ENCODE measurements at regions of chr9 and their contacts with region 1.

Region 1: GRCh38 chr9:87805259-87805658 is 77.4 kb upstream of the SPATA31E1 start:
- DNase-seq: no peak
- ATAC-seq: no peak
- H3K4me3 ChIP-seq: no peak overlapping the region
- H3K4me3 Mint-ChIP-seq: no peak overlapping the region
- H3K27ac ChIP-seq: no peak overlapping the region
- H3K27ac Mint-ChIP-seq: no peak overlapping the region
- H3K4me1 ChIP-seq: no peaks in the 10 kb centered on the region
- H3K4me1 Mint-ChIP-seq: no peaks in the 10 kb centered on the region
- H3K27me3 ChIP-seq: no peaks in the 10 kb centered on the region
- H3K27me3 Mint-ChIP-seq: peaks cover 8% of the 10 kb centered on the region
- CTCF ChIP-seq: no peak

Region 2: DNA sequence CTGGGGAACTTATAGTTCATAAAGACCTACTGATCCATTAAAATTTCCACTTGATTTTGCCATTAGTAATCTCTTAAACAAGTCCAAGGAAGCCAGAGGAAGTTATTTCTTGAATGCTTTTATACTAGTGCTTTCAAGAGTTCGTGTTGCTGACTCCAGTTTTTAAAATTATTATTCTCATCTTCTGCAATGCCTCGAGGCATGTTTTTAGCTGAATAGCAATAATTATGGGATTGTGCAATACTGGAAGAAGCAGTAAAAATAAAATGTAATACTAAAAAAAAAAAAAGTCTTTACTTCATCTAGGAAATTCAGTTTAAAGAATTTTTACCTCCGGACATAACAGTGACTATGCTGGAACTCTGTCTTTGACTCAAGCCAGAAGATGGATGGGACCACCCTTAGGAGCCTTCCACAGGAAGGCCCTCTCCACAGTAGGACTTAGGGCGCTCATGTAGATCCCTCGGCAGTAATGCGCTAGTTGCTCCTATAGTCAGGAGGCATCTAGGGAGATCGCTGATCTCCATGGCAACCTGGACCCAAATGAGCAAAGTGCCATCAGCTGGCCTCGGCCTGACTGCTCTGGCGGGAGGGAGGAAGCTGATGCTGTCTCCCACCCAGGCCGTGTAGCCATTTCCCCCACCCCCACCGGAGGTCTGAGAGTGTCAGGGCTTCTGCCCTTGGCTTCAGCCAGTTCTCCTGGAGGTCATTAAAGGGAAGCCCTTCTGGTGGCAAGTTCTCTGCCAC is 250.9 kb before region 1 on chr9:
- CTCF ChIA-PET with region 1: no interaction called
- POLR2A ChIA-PET with region 1: no interaction called
- intact Hi-C with region 1: loop called in 1 of 2 experiments (anchors 5 kb)
- DNase-seq: no peak
- ATAC-seq: no peak
- H3K4me3 ChIP-seq: no peak overlapping the region
- H3K4me3 Mint-ChIP-seq: no peak overlapping the region
- H3K27ac ChIP-seq: no peak overlapping the region
- H3K27ac Mint-ChIP-seq: no peak overlapping the region
- H3K4me1 ChIP-seq: no peaks in the 10 kb centered on the region
- H3K4me1 Mint-ChIP-seq: no peaks in the 10 kb centered on the region
- H3K27me3 ChIP-seq: no peaks in the 10 kb centered on the region
- H3K27me3 Mint-ChIP-seq: peaks cover 8% of the 10 kb centered on the region
- CTCF ChIP-seq: no peak

Region 3: DNA sequence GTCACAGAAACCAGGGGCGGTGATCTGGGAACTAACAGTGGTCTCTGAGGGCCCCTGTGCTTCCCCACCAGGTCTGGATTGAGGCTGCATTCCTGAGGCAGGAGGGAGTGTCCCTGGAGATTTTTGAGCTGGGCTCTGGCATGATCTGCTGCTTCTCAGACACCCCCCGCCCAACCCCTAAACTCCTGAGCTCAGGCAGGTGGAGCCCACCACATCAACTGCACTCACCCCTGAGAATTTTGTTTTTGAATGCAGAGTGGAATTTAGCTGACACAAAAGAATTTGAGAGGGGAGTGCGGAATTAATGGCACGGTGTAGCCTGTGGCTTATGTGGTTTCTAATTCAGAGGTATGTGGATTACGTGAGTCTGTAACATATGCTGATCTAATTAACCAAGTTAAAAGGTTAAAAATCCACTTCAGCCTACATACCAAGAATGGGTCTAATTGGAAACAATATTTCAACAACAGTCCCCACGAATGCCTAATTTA is 103.3 kb before region 1 on chr9:
- CTCF ChIA-PET with region 1: no interaction called
- POLR2A ChIA-PET with region 1: no interaction called
- intact Hi-C with region 1: no loop called
- DNase-seq: no peak
- ATAC-seq: no peak
- H3K4me3 ChIP-seq: no peak overlapping the region
- H3K4me3 Mint-ChIP-seq: no peak overlapping the region
- H3K27ac ChIP-seq: no peak overlapping the region
- H3K27ac Mint-ChIP-seq: no peak overlapping the region
- H3K4me1 ChIP-seq: no peaks in the 10 kb centered on the region
- H3K4me1 Mint-ChIP-seq: no peaks in the 10 kb centered on the region
- H3K27me3 ChIP-seq: no peaks in the 10 kb centered on the region
- H3K27me3 Mint-ChIP-seq: no peaks in the 10 kb centered on the region
- CTCF ChIP-seq: no peak

Region 4: DNA sequence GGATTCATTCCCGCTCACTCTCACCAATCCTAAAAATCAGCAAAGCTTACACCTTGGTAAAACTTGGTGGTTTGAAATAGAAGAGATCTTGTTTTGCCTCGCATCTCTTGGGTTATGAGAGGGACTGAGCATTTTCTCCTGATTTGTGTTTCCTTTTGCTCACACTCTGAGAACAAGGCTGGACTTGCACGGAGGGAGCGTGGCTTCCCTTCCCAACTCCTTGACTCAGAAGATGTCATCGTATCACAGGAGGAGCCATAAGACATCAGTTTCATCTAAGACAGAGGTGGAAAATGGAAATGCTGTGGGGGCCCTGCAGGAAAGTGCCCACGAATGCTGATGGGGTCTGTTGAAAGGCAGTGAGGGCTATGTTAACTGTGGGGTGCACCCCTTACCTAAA is 42.0 kb before region 1 on chr9:
- CTCF ChIA-PET with region 1: no interaction called
- POLR2A ChIA-PET with region 1: no interaction called
- intact Hi-C with region 1: no loop called
- DNase-seq: no peak
- ATAC-seq: no peak
- H3K4me3 ChIP-seq: no peak overlapping the region
- H3K4me3 Mint-ChIP-seq: no peak overlapping the region
- H3K27ac ChIP-seq: no peak overlapping the region
- H3K27ac Mint-ChIP-seq: no peak overlapping the region
- H3K4me1 ChIP-seq: no peaks in the 10 kb centered on the region
- H3K4me1 Mint-ChIP-seq: no peaks in the 10 kb centered on the region
- H3K27me3 ChIP-seq: no peaks in the 10 kb centered on the region
- H3K27me3 Mint-ChIP-seq: peaks cover 4% of the 10 kb centered on the region
- CTCF ChIP-seq: no peak